Activated T-helper 1 cell treated with anti-CD3 and anti-CD28 coated beads, Interleukin-12 subunit alpha, Interleukin-12 subunit beta, Interleukin-2, Interleukin-4 antibody, amounts not matched to agents 30 ng/mL and 10 ng/mL and 1 ng/mL, durations not matched to agents 14 hours and 24 hours and 36 hours (primary cell): ENCODE measurements at regions of chr15 and their contacts with region 1.

Region 1: GRCh38 chr15:63891079-63891767 is 57.5 kb upstream of the HERC1 start:
- DNase-seq: peak; percentile 59
- H3K4me3 Mint-ChIP-seq: no peak overlapping the region
- H3K27ac Mint-ChIP-seq: peak overlapping the region; percentile 76
- H3K4me1 Mint-ChIP-seq: peaks cover 62% of the 10 kb centered on the region
- H3K27me3 Mint-ChIP-seq: peaks cover 1% of the 10 kb centered on the region

Region 2: GRCh38 chr15:63473999-63474809 is 417.0 kb before region 1 on chr15:
- intact Hi-C with region 1: loop called (anchors 5 kb)
- DNase-seq: peak; percentile 52
- H3K4me3 Mint-ChIP-seq: peak overlapping the region; percentile 66
- H3K27ac Mint-ChIP-seq: peak overlapping the region; percentile 95
- H3K4me1 Mint-ChIP-seq: peaks cover 54% of the 10 kb centered on the region
- H3K27me3 Mint-ChIP-seq: peaks cover 1% of the 10 kb centered on the region

Region 3: DNA sequence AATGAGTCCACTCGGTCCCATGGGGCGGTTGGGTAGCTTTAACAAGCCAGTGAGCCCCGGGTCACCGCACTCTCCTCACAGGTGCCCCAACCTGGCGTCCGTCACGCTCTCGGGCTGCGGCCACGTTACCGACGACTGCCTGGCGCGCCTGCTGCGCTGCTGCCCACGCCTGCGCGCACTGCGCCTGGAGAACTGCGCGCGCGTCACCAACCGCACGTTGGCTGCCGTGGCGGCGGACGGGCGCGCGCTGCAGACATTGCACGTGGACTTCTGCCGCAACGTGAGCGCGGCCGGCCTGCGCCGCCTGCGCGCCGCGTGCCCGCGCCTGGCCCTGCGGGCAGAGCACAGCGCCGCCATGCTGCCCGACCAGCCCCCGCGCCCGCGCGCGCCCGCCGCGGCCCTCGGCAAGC is 290.6 kb before region 1 on chr15:
- intact Hi-C with region 1: no loop called
- DNase-seq: peak; percentile 86
- H3K4me3 Mint-ChIP-seq: peak overlapping the region; percentile 88
- H3K27ac Mint-ChIP-seq: peak overlapping the region; percentile 87
- H3K4me1 Mint-ChIP-seq: peaks cover 51% of the 10 kb centered on the region
- H3K27me3 Mint-ChIP-seq: peaks cover 2% of the 10 kb centered on the region

Region 4: GRCh38 chr15:63752075-63752684 is 139.0 kb before region 1 on chr15:
- intact Hi-C with region 1: loop called (anchors 1 kb)
- DNase-seq: peak; percentile 21
- H3K4me3 Mint-ChIP-seq: no peak overlapping the region
- H3K27ac Mint-ChIP-seq: no peak overlapping the region
- H3K4me1 Mint-ChIP-seq: peaks cover 9% of the 10 kb centered on the region
- H3K27me3 Mint-ChIP-seq: no peaks in the 10 kb centered on the region

Region 5: DNA sequence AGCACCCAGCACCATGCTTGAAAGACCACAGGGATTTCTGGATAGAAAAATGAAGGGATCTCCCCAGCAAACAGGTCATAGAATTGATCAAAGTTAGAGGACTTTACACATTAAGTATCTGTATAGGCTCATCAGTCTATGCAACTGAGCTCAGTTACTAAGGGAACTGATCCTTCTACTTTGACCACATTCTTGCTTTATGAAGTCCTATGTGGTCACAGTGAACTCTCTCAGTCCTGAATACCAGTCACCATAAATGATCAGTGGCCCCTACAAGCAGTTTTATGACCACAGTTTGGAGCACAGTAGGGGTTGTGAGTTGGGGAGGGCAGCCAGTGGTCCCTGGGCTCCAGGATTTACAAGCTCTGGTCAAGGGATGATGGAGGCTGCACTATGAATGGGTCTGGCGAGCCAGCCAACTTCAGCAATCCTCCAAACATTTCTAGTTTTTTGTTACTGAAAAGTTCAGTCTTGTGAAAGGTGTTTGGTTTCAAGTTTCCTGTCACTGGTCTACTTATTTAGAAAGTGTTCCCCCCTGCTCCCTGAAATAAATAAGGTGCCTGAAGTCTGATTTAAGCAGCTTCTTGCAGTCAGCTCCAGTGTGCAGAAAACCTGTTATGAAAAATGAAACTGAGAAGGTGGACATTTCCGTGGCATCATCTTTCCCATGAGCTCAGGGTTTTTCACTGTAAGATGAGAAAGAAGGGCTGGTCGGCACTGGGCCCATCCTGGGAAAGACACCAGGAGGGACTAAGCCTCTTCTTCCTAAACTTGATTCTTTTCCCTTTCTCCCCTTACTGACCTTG is 79.6 kb after region 1 on chr15:
- intact Hi-C with region 1: loop called (anchors 1 kb)
- DNase-seq: peak; percentile 27
- H3K4me3 Mint-ChIP-seq: peak overlapping the region; percentile 77
- H3K27ac Mint-ChIP-seq: peak overlapping the region; percentile 100
- H3K4me1 Mint-ChIP-seq: peaks cover 56% of the 10 kb centered on the region
- H3K27me3 Mint-ChIP-seq: no peaks in the 10 kb centered on the region

Region 6: GRCh38 chr15:64046347-64047153 is 155.3 kb after region 1 on chr15 and contains the start of gene DAPK2:
- intact Hi-C with region 1: loop called (anchors 1 kb)
- DNase-seq: peak; percentile 64
- H3K4me3 Mint-ChIP-seq: peak within 1 kb of the TSS; percentile 81
- H3K27ac Mint-ChIP-seq: peak within 1 kb of the TSS; percentile 49
- H3K4me1 Mint-ChIP-seq: peaks cover 36% of the 10 kb centered on the region
- H3K27me3 Mint-ChIP-seq: peaks cover 26% of the 10 kb centered on the region
- total RNA-seq, gene DAPK2: 8.6 and 8.7 TPM in 2 replicates